Calu3 (cell line): ENCODE measurements at regions of chr9 and their contacts with region 1.

Region 1: DNA sequence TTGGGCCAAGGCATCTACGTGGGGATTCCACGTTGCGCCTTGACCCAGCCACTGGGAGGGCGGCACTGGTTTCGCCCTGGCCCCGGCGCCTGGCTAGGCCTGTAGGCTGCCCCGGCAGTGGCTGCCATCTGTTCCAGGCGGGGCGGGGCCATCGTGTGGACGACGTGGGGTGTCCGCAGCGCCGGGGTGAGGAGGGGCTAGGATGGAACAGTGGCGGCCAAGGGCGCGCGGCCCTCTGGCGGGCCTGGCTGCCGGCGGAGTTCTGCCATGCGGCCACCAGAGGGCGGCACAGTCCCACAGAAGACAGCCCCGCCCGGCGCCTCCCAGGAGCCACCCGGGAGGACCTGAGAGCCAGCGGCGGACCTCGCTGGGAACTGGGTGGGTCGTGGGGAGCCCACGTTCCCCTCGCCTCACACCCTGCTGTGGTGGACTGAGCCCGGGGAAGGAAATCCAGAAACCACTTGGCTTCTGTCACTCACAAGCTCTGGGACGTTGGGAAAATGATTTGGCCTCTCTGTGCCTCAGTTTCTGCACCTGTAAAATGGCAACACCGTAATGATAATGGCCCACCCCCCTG is 22.6 kb upstream of the RAPGEF1 start:
- DNase-seq: peak; percentile 80
- H3K4me3 Mint-ChIP-seq: no peak overlapping the region
- H3K27ac Mint-ChIP-seq: no peak overlapping the region
- H3K4me1 Mint-ChIP-seq: no peaks in the 10 kb centered on the region
- H3K27me3 Mint-ChIP-seq: peaks cover 63% of the 10 kb centered on the region
- CTCF ChIP-seq: peak; percentile 82

Region 2: DNA sequence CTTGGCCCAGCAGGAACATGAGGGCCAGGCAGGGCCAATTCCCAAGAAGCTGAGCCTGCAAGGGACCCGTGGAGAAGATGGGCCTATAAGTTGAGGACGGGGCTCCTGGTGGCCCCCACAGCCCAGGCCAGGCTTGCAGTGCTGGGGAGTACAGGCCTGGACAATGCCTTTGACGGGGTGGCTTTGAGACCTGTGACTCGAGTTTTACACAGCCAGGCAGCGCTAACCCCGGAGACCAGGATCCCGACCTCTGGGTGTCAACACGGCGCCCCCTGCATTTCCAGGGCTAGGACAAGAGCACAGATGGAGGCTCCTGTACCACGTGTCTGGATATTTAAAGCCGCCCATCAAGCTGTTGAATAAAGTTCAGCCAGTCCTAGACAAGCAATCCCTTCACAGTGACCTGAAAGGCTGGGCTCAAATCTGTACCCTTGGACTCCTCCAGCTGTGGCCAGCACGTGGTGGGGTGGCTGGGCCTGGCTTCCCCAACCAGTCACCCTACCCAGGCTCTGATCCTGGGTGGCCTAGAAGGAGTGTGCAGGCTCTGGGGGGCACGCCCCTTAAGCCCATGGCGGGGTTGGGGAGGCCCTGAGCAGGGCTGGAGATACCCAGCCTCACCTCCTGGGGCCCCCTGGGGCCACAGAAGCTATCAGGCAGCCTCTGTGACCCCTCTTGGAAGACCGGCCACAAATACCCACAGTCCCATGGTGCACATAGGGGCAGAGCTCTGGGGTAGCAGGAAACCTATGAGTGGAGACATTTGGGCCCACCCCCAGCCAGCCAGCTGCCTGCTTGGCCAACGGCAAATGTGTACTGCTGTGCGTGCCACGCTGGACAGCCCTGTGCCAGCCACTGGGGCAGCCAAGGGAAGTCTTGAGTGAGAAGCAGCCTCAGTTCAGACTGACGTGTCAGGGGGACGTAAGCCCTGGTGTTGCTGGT is 488.1 kb after region 1 on chr9:
- CTCF ChIA-PET with region 1: interaction called, 4 read pairs
- intact Hi-C with region 1: loop called (anchors 5 kb)
- DNase-seq: no peak
- H3K4me3 Mint-ChIP-seq: no peak overlapping the region
- H3K27ac Mint-ChIP-seq: no peak overlapping the region
- H3K4me1 Mint-ChIP-seq: no peaks in the 10 kb centered on the region
- H3K27me3 Mint-ChIP-seq: peaks cover 18% of the 10 kb centered on the region
- CTCF ChIP-seq: no peak